Left cardiac atrium (tissue), 4 donors: ENCODE measurements at regions of chr3 and their contacts with region 1.

Region 1: GRCh38 chr3:65170390-65171042 is 482.7 kb upstream of the ADAMTS9 start:
- DNase-seq: peak; percentile 93
- ATAC-seq: peak; percentile 89 to 90

Region 2: DNA sequence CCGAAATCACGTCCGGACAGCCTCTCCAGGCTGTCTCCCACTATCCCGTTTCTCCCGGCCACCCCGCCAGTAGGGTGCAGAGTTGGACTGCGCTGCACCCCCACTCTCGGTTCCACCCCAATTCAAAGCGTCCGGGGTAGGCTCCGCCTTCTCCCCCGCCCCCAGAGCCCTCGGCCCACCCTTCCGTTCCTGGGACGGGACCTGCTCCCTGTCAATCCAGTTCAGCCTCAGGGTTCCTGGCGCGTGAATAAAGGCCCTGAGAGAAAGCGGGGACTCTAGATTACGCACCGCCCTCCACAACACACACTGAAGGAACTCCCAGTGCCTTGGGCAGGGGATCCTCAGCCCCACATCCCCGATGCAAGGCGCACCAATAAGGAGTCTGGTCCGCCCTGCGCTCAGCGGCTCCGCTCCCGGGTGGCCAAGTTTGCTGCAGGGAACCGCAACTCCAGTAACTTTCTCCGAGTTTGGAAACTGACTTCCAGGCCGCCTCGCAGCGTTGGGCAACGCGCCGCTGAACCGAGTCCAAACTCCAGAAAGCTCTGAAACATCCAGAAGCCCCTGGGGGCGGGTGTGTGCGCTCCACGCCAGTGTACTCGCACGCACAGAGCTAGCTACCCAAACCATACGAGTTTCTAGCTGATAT is 484.6 kb before region 1 on chr3:
- intact Hi-C with region 1: loop called (anchors 2 to 10 kb)
- DNase-seq: peak; percentile 92
- ATAC-seq: peak; percentile 89 to 91

Region 3: DNA sequence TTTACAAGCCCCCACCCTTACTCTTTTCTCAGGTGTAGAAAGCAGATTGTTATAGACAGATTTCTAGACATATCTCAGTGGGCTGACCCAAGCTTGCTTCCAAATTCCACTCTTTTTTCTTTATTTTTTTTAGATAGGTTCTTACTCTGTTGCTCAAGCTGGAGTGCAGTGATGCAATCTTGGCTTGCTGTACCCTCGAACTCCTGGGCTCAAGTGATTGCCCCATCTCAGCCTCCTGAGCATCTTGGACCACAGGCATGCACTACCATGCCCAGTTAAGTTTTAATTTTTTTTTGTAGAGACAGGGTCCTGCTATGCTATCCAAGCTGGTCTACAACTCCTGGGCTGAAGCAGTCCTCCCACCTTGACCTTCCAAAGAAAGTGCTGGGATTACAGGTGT is 429.2 kb before region 1 on chr3:
- intact Hi-C with region 1: no loop called
- DNase-seq: peak; percentile 49
- ATAC-seq: peak; percentile 60 to 65

Region 4: DNA sequence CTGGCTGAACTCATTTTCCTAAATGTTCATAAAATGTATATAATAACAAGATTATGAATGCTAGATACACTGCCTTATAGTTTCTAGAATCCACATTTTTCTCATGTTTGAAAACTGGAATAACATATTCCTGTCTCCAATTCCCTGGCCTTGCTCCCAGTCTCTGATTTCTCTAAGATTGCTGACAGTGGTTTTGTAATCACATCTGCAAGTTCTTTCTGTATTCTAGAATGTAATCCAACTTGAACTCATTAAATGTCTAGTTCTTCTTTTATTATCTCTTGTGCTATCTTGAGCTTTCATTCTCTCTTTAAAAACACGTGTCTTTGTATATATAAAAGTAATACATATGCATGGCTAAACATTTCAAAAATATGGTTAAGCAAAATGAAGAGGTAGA is 267.5 kb before region 1 on chr3:
- intact Hi-C with region 1: loop called in 1 of 2 experiments (anchors 5 kb)
- DNase-seq: no peak
- ATAC-seq: no peak

Region 5: DNA sequence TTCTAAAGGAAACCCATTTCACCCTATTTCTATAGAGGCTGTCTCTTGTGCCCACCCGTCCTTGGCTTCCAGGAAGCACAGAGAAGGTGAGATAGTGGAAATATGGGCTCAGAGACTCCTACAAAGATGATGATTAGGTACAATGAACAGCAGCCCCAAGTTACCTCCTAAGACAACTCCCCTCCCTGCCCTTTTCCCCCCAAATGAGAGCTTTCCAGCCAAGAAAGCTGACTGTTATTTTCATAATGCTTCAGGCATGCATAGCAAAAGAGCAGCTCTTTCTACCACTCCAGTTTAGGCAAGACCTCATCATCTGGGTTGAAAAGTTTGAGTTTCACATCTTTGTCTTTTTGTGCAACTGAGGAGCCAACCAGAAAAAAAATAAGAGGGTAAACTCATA is 234.0 kb before region 1 on chr3:
- intact Hi-C with region 1: no loop called
- DNase-seq: no peak
- ATAC-seq: peak in 1 of 2 donors; percentile 81

Region 6: DNA sequence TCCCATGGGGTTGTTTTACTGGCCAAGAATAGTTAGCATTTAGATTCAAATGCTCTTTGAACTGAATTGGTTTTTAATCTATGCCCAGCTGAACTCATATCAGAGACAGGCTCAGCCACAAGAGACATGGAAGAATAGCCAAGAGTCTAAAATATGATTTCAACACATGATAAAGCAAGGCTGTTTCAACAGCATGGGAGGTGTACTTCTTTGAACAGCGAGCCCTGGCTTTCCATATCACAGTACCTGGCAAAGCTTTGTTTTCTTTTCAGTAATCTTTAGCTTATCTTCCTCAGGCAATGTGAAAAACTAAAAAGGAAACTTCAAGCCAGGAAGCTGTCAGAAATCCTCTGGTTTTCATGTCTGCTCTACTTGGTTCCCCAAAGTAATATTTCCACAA is 69.1 kb before region 1 on chr3:
- intact Hi-C with region 1: no loop called
- DNase-seq: no peak
- ATAC-seq: peak in 1 of 2 donors; percentile 83